ENCODE measurements at regions of chr16 and their contacts with region 1.

Region 1: DNA sequence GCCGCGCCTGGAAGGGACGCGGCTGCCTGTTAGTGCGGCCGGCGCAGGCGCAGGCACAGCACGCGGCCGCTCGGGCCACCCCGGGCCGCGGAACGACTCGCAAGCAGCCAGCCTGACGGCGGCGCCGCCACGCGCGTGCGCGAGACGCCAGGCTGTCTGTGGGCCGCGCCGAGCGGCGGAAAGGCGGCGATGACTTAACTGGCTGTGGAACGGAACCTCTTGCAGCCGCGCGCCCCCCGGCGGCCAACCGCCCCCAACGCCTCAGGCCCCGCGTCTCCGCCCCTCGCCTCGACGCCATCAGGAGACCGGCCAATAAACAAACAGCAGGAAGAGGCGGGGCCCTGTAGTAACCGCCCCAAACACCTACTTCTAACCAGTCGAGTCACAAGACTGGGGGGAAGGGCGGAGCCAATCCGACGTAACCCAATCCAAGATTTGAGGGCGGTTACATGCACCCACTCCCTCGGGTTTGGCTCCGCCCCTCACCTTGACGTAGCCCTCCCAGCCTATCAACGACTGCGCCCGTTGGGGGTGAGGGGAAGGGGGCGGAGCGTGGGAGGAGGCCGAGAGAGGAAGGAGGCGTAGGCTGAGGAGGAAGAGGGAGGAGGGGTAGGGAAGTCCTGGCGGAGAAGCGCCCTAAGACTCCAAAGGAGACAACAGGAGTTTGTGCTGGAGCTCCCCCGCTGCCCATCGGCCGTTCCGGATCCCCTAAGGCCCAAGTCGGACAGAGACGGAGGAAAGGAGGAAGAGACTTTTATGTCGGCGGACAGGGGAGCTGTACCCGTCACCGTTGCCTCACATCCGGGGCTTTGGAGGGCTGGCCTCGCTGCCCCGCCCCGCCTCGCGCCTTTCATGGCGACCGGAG is at the start of gene FBRS:
- H3K4me3 ChIP-seq: peak within 1 kb of the TSS; percentile 91
- H3K27ac ChIP-seq: peak within 1 kb of the TSS; percentile 95
- H3K4me1 ChIP-seq: peaks cover 7% of the 10 kb centered on the region
- CTCF ChIP-seq: peak; percentile 99

Region 2: DNA sequence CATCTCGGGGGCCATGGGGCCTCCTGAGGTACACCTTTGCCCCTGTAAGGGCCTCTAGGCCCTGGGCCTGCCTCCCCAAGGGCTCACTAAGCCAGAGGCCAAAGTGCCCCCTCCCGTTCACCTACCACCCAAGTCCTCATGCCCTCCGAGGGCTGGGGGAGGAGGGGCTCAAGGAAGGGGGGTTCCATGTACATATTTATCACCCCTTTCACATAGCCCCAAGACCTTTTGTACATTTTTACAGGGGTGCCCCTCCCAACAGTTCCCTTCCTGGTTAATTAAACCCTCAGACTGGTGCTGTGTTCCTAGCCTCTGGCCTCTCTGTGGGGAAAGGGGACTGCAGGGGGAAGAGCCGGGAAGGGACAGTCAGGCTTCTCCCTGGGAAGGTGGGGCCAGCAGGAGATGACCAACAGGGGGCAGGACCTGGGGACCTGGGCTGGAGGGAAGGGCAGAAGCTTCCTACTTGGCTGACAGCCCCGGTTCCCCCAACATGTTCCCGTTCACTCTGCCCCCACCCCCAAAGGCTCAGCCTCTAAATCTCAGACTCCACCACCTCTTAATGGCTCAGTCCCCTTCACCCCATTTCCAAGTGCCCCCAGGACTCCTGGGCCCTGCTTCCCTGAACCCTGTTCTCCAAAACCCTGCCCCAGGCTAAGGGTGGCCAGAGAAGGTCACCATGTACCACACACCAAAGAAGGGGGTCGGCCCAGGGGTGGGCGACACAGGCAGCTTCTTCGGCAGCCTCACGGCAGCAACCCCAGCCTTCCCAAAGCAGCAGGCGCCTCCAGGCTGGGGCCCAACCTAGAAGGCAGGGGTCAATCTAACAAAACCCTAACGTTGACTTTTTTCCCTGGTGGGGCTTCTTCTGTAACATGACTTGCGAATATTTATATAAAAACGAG is 12.0 kb after region 1 on chr16:
- CTCF ChIA-PET with region 1: interaction called, 3 read pairs
- POLR2A ChIA-PET with region 1: interaction called, 11 read pairs
- H3K4me3 ChIP-seq: no peak overlapping the region
- H3K27ac ChIP-seq: no peak overlapping the region
- H3K4me1 ChIP-seq: no peaks in the 10 kb centered on the region
- CTCF ChIP-seq: no peak

Region 3: DNA sequence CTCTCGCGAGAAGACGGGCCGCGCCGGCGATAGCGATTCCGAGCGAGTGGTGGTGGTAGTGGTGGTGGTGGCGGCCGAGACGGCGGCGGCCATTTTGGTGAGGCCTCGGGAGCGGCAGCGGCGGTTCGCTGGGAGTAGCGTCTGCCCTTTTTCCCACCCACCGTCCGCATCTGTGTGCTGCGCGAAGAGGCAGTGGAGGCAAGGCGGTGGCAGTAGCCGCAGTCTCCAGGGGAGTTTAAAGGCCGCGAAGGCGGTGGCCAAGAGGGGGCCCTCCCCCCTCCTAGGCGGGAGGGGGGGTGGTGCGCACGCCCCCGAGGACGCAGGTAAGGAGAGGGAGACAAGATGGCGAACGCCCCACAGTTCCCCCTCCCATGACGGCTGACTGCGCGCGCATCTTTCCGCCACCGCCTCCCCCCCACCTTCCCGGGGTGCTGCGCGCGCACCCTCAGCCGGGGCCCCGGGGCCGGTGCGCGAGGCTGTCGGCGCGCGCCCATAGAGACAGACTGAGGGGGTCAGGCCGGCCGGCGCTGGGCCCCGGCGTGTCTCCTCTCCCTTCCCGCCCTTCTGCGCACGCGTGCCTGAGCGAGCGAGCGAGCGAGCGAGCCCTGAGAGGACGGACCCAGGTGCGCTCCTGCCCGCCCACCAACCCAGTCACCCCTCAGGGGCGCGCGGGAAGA is 40.2 kb after region 1 on chr16:
- CTCF ChIA-PET with region 1: interaction called, 43 read pairs
- POLR2A ChIA-PET with region 1: interaction called, 29 read pairs
- H3K4me3 ChIP-seq: peak overlapping the region; percentile 98
- H3K27ac ChIP-seq: peak overlapping the region; percentile 100
- H3K4me1 ChIP-seq: no peaks in the 10 kb centered on the region; the same call in 1 of the 2 replicates
- CTCF ChIP-seq: peak; percentile 89

Measured in HEK293 (cell line).